Mammary epithelial cell (primary cell): ENCODE measurements at regions of chr3 and their contacts with region 1.

Region 1: GRCh38 chr3:105518806-105519418 is 152.2 kb downstream of the ALCAM start:
- DNase-seq: peak; percentile 53
- H3K4me3 ChIP-seq: no peak overlapping the region
- H3K27ac ChIP-seq: no peak overlapping the region
- H3K4me1 ChIP-seq: peaks cover 3% of the 10 kb centered on the region
- H3K27me3 ChIP-seq: no peaks in the 10 kb centered on the region
- CTCF ChIP-seq: peak; percentile 35 to 63

Region 2: DNA sequence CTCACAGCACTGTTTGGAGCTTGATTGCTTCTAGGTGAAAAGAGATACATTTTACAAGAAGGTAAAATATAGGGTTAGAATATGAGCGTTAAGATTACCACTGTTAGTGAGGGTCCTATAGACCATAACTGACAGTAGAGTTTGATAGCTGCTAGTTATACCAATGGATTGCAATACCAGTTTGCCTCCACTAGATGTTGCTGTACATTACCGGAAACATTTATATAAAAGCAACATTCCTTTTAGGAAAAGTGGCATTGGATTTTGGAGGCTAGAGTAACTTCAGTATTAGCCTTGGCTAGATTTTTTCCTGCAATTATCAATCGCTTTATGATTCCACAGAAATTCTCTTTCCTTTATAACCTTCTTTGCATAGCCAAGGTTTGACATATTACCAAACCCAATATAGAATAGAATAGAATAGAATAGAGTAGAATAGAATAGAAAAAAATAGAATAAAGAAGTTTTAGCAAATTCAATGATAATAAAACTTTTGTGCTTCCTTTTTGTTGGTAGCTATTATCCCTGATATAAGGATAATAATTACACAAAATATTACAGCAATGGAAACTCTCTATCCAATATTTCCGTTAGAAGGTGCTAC is 1245.8 kb before region 1 on chr3:
- CTCF ChIA-PET with region 1: no interaction called
- dilution Hi-C with region 1: no loop called
- in situ Hi-C with region 1: no loop called
- intact Hi-C with region 1: loop called (anchors 2 kb)
- DNase-seq: peak; percentile 17
- H3K4me3 ChIP-seq: no peak overlapping the region
- H3K27ac ChIP-seq: no peak overlapping the region
- H3K4me1 ChIP-seq: no peaks in the 10 kb centered on the region
- H3K27me3 ChIP-seq: no peaks in the 10 kb centered on the region
- CTCF ChIP-seq: peak; percentile 80 to 84

Region 3: GRCh38 chr3:104596551-104596950 is 922.4 kb before region 1 on chr3:
- CTCF ChIA-PET with region 1: no interaction called
- dilution Hi-C with region 1: no loop called
- in situ Hi-C with region 1: loop called (anchors 25 kb)
- intact Hi-C with region 1: loop called (anchors 2 kb)
- DNase-seq: peak; percentile 42
- H3K4me3 ChIP-seq: no peak overlapping the region
- H3K27ac ChIP-seq: no peak overlapping the region
- H3K4me1 ChIP-seq: no peaks in the 10 kb centered on the region
- H3K27me3 ChIP-seq: no peaks in the 10 kb centered on the region
- CTCF ChIP-seq: peak; percentile 60 to 68

Region 4: GRCh38 chr3:104604369-104605010 is 914.4 kb before region 1 on chr3:
- CTCF ChIA-PET with region 1: interaction called, 4 read pairs
- dilution Hi-C with region 1: no loop called
- in situ Hi-C with region 1: loop called (anchors 25 kb)
- intact Hi-C with region 1: no loop called
- DNase-seq: peak; percentile 11
- H3K4me3 ChIP-seq: no peak overlapping the region
- H3K27ac ChIP-seq: no peak overlapping the region
- H3K4me1 ChIP-seq: no peaks in the 10 kb centered on the region
- H3K27me3 ChIP-seq: no peaks in the 10 kb centered on the region
- CTCF ChIP-seq: peak; percentile 47 to 52

Region 5: GRCh38 chr3:105195260-105195659 is 323.7 kb before region 1 on chr3:
- CTCF ChIA-PET with region 1: no interaction called
- dilution Hi-C with region 1: no loop called
- in situ Hi-C with region 1: no loop called
- intact Hi-C with region 1: loop called (anchors 10 kb)
- DNase-seq: peak; percentile 14
- H3K4me3 ChIP-seq: no peak overlapping the region
- H3K27ac ChIP-seq: no peak overlapping the region
- H3K4me1 ChIP-seq: no peaks in the 10 kb centered on the region
- H3K27me3 ChIP-seq: no peaks in the 10 kb centered on the region
- CTCF ChIP-seq: no peak

Region 6: GRCh38 chr3:105353485-105354161 is 165.3 kb before region 1 on chr3:
- CTCF ChIA-PET with region 1: no interaction called
- dilution Hi-C with region 1: no loop called
- in situ Hi-C with region 1: no loop called
- intact Hi-C with region 1: no loop called
- DNase-seq: no peak
- H3K4me3 ChIP-seq: no peak overlapping the region
- H3K27ac ChIP-seq: no peak overlapping the region
- H3K4me1 ChIP-seq: peaks cover 39% of the 10 kb centered on the region
- H3K27me3 ChIP-seq: no peaks in the 10 kb centered on the region
- CTCF ChIP-seq: no peak